ENCODE measurements at regions of chr10 and their contacts with region 1.

Region 1: GRCh38 chr10:71048971-71049615 is 160.7 kb upstream of the PCBD1 start:
- DNase-seq: peak; percentile 62

Region 2: DNA sequence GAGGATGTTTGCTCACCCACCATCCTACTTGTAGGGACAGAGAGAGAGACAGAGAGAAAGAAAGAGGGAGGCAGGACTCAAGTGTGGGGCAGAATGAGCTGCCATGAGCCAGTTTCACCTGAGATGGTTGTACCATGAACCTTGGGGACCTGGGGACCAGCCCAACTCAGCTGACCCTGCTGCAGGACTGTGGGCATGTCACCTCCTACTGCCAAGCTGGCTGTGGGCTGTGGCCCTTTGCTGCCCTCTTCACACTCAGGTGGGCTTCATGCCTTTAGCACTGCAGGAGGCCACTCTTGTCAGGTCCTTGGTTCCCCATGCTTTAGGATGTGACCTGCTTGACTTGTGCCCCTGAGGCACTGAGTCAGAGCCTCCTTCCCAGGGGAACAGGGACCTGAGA is 52.5 kb before region 1 on chr10:
- intact Hi-C with region 1: loop called in 1 of 2 experiments (anchors 1 kb)
- DNase-seq: peak; percentile 50

Region 3: DNA sequence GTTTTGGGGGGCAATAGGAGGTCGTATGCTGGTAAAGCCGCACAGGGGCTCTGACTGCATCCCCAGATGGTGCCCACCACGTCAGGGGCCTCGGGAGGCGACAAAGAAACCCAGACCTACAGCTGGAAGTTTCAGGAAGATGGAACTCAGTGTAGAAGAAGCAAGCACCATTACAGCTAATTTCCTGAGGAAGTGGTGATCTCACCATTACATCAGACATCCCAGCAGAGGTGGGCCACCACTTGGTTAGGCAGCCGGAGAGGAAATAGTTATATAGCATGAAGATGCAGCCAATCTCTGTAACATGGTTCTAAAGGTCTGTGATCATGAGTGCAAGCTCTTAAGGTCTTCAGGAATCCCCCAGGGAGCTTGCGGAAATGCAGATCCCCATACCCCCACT is 33.4 kb before region 1 on chr10:
- intact Hi-C with region 1: no loop called
- DNase-seq: peak; percentile 15

Measured in posterior vena cava (tissue), 2 donors.